Astrocyte of the cerebellum (primary cell): ENCODE measurements at regions of chr2 and their contacts with region 1.

Region 1: DNA sequence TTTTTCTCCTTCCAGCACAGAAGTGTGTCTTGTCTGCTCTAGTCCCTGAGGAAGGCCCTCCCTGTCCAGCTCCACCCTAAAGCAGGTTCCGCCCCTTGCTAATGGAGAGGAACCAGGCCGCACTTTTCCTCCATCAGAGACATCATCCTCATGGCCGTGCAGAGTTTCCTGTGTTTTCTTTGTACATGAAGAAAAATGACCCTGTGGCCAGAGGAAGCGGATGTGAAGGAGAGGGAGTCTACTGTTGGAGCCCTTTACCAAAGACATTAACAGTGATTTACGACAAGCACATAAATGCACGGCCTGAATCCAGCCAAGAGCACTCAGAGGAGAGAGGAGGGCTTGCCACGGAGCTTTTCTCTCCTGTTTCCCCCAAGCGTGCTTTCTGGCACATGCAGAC is 109.5 kb downstream of the RNF144A start:
- DNase-seq: no peak
- H3K4me3 ChIP-seq: no peak overlapping the region
- CTCF ChIP-seq: no peak

Region 2: GRCh38 chr2:6917071-6917760 is 109.5 kb before region 1 on chr2 and contains the start of gene RNF144A:
- in situ Hi-C with region 1: loop called (anchors 10 kb)
- DNase-seq: no peak
- H3K4me3 ChIP-seq: peak within 1 kb of the TSS; percentile 78
- CTCF ChIP-seq: peak; percentile 42

Region 3: GRCh38 chr2:6929196-6929819 is 97.4 kb before region 1 on chr2:
- in situ Hi-C with region 1: no loop called
- DNase-seq: no peak
- H3K4me3 ChIP-seq: no peak overlapping the region
- CTCF ChIP-seq: no peak

Region 4: DNA sequence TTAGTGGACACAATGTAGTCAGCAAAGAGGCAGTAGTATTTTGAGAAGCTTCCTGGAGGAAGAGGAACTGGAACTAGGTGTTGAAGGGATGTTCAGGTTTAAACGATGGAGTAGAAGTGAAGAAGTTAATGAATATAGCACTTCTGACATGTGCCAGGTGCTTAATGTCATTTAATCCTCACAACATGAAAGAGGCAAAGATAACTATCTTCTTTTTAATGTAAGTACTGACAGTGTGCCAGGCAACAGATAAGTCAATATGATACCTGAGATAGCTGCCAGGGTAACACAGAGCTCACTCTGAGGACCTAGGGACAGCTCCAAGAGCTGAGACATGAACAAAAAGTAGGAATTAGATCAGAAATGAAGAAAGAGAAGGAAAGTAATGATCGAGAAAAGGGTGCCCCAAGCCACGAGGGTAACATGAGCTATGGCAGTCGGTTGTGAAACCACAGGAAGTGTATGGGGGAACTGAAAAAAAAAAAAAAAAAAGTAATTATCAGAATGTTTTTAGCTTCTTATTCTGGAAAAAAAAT is 31.2 kb after region 1 on chr2:
- in situ Hi-C with region 1: loop called (anchors 5 kb)
- DNase-seq: no peak
- H3K4me3 ChIP-seq: no peak overlapping the region
- CTCF ChIP-seq: no peak